Pancreas (tissue), 10 donors: ENCODE measurements at regions of chr1 and their contacts with region 1.

Region 1: DNA sequence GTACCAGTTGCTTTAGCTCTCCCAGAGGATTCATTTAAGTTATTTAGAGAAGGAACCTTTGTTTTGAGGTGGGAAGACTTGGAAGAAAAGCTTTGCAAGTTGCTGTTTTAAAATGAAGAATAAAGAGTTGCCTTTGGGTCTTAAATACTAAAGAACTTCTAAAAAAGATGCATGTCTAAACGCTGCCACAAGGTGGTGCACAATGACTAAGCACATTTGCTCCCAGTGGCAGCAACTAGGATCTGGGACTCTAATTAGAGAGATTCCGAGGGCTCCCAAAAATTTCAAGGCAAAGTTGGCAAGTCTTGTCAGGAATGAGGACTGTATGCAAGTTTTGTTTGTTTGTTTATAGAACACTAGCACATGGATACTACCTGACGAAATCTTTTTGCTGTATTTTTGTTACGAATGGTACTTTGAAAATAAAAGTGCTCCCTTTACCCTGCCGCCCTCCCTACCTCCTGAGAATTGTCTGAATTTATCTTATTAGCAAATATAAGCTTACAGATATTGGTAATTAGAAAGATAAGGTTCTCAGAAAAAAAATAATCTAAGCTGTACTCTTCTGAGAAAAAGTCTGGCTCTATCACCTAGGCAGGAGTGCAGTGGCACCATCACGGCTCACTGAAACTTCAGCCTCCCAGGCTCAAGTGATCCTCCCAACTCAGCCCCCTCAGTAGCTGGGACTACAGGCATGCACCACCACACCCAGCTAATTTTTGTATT is 121.8 kb downstream of the HFM1 start:
- DNase-seq: peak in 3 of 6 donors; percentile 19 to 58 (median 31)
- ATAC-seq: peak; percentile 72 to 93 (median 88)
- H3K4me3 ChIP-seq: peak overlapping the region in 1 of 4 donors; percentile 29
- H3K27ac ChIP-seq: no peak overlapping the region
- H3K4me1 ChIP-seq: no peaks in the 10 kb centered on the region
- H3K27me3 ChIP-seq: no peaks in the 10 kb centered on the region
- CTCF ChIP-seq: peak; percentile 46 to 71 (median 69)

Region 2: GRCh38 chr1:91397605-91398004 is 114.7 kb after region 1 on chr1:
- intact Hi-C with region 1: loop called in 1 of 3 experiments (anchors 10 kb)
- DNase-seq: no peak
- ATAC-seq: no peak
- H3K4me3 ChIP-seq: no peak overlapping the region
- H3K27ac ChIP-seq: no peak overlapping the region
- H3K4me1 ChIP-seq: no peaks in the 10 kb centered on the region
- H3K27me3 ChIP-seq: no peaks in the 10 kb centered on the region
- CTCF ChIP-seq: no peak